Endothelial cell of umbilical vein (primary cell): ENCODE measurements at regions of chr2 and their contacts with region 1.

Region 1: DNA sequence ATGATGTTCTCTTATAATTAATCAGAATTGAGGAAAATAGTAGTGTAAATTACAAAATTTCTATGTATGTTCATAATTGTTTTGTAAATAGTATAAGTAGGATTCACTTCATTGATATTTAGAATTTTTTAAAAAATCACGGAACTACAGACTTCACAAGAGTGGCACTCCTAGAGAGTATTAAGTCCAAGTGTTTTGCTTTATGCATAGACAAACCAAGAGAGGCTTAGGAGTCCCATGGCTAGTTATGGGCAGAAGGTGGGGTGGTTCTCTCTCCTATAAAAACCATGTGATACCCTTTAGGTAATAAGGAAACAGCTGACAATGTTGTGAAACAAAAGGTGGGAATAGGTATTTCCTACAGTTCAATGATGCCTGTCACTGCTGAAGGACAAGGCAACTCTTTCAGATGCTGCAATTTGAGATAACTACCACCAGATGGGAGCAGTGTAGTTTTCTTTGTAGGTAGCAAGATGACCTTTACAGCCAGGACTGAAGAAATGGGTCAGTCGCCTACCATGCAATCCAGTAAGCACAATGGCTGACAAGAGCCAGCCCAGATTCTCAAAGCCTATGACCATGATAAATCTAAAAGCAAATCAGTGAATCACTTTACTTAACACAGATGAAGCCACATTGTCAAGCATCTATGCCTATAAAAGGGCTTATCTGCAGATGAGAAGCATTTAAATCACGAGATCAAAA is 83.9 kb downstream of the AAK1 start:
- DNase-seq: peak; percentile 69
- H3K4me3 ChIP-seq: no peak overlapping the region
- H3K27ac ChIP-seq: no peak overlapping the region
- H3K4me1 ChIP-seq: peaks cover 21% of the 10 kb centered on the region
- H3K27me3 ChIP-seq: no peaks in the 10 kb centered on the region
- CTCF ChIP-seq: peak; percentile 50 to 51
- POLR2A ChIP-seq: no peak

Region 2: DNA sequence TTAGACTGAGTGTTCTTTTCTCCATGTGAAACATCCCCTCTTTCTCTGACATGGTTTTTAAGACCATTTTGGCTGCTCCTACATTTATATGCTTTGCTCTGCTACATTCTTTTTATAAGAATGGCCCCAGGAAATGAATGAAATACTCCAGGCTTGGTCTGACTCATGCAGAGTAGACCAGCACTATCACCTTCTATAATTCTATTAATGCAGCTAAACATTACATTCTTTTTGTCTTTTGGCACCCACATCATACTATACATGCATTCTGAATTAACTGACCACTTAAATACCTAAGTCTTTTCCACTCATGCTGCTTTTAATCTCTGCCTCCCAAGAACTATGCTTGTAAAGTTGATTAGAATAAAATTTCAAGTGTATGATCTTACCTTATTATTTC is 10.2 kb before region 1 on chr2:
- CTCF ChIA-PET with region 1: interaction called, 78 read pairs
- POLR2A ChIA-PET with region 1: no interaction called
- dilution Hi-C with region 1: no loop called
- intact Hi-C with region 1: no loop called
- DNase-seq: peak; percentile 50
- H3K4me3 ChIP-seq: no peak overlapping the region
- H3K27ac ChIP-seq: peak overlapping the region; percentile 60
- H3K4me1 ChIP-seq: peaks cover 38% of the 10 kb centered on the region
- H3K27me3 ChIP-seq: no peaks in the 10 kb centered on the region
- CTCF ChIP-seq: no peak
- POLR2A ChIP-seq: no peak